ENCODE measurements at regions of chr17 and their contacts with region 1.

Region 1: DNA sequence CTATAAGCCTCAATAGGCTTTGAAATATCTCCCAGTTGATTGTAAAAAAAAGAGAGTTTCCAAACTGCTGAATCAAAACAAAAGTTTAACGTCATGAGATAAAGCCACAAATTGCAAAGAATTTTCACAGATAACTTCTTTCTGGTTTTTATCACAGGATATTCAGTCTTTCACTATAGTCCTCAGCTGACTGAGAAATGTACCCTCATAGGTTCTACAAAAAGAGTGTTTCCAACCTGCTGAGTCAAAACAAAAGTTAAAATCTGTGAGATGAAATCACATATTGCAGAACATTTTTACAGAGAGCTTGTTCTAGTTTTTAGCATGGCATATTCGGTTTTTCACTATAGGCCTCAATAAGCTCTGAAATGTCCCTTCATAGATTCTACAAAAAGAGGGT is 559.2 kb downstream of the KCNJ18 start:
- DNase-seq: no peak
- ATAC-seq: no peak
- H3K4me3 ChIP-seq: no peak overlapping the region
- H3K27ac ChIP-seq: no peak overlapping the region
- H3K4me1 ChIP-seq: no peaks in the 10 kb centered on the region
- H3K27me3 ChIP-seq: no peaks in the 10 kb centered on the region
- CTCF ChIP-seq: no peak
- POLR2A ChIP-seq: no peak
- RAD21 ChIP-seq: no peak

Region 2: DNA sequence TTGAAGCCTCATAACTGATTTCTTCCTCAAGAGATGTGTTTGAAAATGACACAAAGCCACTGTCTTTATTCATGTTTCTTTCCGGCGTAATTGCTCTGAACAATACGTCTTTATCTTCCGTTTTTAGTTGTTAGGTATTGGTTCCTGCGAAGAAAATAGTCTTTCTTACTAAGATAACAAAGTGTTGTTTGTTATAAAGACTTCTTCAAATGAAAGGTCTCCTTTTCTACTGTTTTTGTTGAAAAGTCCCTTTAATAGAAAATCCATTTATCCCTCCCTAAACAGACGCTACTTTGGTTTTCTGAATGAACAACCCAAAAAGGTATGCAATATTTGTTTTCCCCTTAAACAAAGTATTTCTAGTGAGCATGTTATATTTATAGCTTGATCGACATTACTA is 90.1 kb before region 1 on chr17:
- CTCF ChIA-PET with region 1: interaction called, 3 read pairs
- POLR2A ChIA-PET with region 1: no interaction called
- dilution Hi-C with region 1: no loop called
- in situ Hi-C with region 1: no loop called
- intact Hi-C with region 1: loop called (anchors 10 kb)
- DNase-seq: no peak
- ATAC-seq: no peak
- H3K4me3 ChIP-seq: no peak overlapping the region
- H3K27ac ChIP-seq: no peak overlapping the region
- H3K4me1 ChIP-seq: no peaks in the 10 kb centered on the region
- H3K27me3 ChIP-seq: no peaks in the 10 kb centered on the region
- CTCF ChIP-seq: no peak
- POLR2A ChIP-seq: no peak
- RAD21 ChIP-seq: no peak